Dendritic cell treated with granulocyte-macrophage colony-stimulating factor and Interleukin-4, amounts not matched to agents 40 ng/mL and 50 ng/mL, for 4 days (primary cell): ENCODE measurements at regions of chr14 and their contacts with region 1.

Region 1: DNA sequence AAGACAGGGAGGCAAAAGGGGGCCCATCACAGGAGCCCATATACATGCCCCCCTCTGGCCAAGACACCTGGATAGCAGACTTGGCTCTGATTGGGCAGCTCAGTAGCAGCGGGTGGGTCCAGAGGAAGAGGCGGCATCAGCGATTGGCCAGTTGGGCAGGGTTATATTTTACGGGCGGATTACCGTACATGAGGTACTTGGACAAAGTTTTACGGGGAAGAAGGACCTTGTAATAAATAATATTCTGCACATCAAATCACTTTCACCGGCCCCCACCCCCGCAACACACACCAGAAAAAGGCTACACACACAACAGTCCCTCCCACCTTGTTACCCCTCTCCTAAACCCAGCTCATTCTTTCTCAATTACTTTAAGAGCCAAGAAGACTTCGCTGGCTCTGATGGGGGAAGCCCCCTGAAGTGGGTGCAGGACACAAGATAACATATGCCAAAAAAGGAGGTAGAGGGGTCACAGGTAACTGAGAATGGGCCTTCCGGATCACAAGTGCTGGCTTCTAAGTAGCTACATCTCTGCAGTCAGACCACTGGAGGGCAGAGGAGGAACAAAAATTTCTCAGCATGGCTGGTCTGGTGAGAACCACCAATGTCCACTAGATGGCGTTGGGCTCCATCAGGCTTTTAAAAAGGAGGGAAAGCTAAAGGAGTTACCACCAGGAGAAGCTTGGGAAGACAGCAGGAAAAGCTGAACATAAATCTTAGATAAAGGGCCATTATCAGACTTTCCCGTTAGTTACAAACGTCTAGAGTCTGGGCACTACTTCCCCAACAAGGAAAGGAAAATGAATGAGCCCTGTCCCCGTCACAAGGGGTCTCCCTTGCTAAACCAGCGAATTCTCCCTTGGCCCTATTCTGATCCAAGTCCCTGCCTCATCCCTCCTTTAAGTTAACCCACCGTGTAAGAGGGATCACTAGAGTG is 11.4 kb upstream of the CDH24 start:
- H3K4me3 Mint-ChIP-seq: no peak overlapping the region
- H3K27ac Mint-ChIP-seq: peak overlapping the region; percentile 67
- H3K4me1 Mint-ChIP-seq: peaks cover 58% of the 10 kb centered on the region
- H3K27me3 Mint-ChIP-seq: no peaks in the 10 kb centered on the region

Region 2: DNA sequence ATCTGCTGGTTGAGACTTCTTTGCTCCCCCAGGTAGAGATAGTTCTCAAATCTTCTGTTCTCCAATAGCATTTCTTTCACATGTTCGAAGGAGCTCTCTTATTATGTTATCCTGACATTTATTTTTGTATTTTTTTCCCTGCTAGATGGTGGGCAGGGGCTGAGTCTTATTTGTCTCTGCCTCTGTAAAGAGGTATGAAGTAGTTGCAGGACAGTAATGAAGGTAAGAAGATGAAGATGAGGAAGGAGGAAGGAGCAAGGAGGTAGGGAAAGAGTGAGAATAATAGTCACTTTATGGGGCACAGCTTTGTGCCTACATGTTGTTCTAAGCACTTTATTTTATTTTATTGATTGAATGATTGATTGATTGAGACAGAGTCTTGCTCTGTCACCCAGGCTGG is 41.0 kb after region 1 on chr14:
- intact Hi-C with region 1: loop called (anchors 1 kb)
- H3K4me3 Mint-ChIP-seq: no peak overlapping the region
- H3K27ac Mint-ChIP-seq: no peak overlapping the region
- H3K4me1 Mint-ChIP-seq: peaks cover 23% of the 10 kb centered on the region
- H3K27me3 Mint-ChIP-seq: peaks cover 7% of the 10 kb centered on the region